ENCODE measurements at regions of chr15 and their contacts with region 1.

Region 1: GRCh38 chr15:56871180-56871579 is 47.3 kb upstream of the TCF12 start:
- DNase-seq: no peak
- H3K4me3 ChIP-seq: no peak overlapping the region
- H3K27ac ChIP-seq: no peak overlapping the region
- H3K4me1 ChIP-seq: peaks cover 3% of the 10 kb centered on the region
- H3K27me3 ChIP-seq: no peaks in the 10 kb centered on the region
- CTCF ChIP-seq: no peak
- EP300 ChIP-seq: no peak
- POLR2A ChIP-seq: no peak

Region 2: GRCh38 chr15:56484287-56484686 is 386.9 kb before region 1 on chr15:
- intact Hi-C with region 1: loop called in 1 of 4 experiments (anchors 10 kb)
- DNase-seq: no peak
- H3K4me3 ChIP-seq: no peak overlapping the region
- H3K27ac ChIP-seq: no peak overlapping the region
- H3K4me1 ChIP-seq: no peaks in the 10 kb centered on the region
- H3K27me3 ChIP-seq: no peaks in the 10 kb centered on the region
- CTCF ChIP-seq: no peak
- EP300 ChIP-seq: no peak
- POLR2A ChIP-seq: no peak

Measured in ovary (tissue), 10 donors.